ENCODE measurements at regions of chr4 and their contacts with region 1.

Region 1: GRCh38 chr4:7705062-7705461 is 234.6 kb downstream of the AFAP1 start:
- DNase-seq: no peak
- H3K4me3 ChIP-seq: no peak overlapping the region
- H3K27me3 ChIP-seq: no peaks in the 10 kb centered on the region
- CTCF ChIP-seq: no peak

Region 2: GRCh38 chr4:7595934-7596461 is 109.1 kb before region 1 on chr4:
- CTCF ChIA-PET with region 1: no interaction called
- POLR2A ChIA-PET with region 1: no interaction called
- DNase-seq: no peak
- H3K4me3 ChIP-seq: no peak overlapping the region
- H3K27me3 ChIP-seq: no peaks in the 10 kb centered on the region
- CTCF ChIP-seq: no peak

Region 3: DNA sequence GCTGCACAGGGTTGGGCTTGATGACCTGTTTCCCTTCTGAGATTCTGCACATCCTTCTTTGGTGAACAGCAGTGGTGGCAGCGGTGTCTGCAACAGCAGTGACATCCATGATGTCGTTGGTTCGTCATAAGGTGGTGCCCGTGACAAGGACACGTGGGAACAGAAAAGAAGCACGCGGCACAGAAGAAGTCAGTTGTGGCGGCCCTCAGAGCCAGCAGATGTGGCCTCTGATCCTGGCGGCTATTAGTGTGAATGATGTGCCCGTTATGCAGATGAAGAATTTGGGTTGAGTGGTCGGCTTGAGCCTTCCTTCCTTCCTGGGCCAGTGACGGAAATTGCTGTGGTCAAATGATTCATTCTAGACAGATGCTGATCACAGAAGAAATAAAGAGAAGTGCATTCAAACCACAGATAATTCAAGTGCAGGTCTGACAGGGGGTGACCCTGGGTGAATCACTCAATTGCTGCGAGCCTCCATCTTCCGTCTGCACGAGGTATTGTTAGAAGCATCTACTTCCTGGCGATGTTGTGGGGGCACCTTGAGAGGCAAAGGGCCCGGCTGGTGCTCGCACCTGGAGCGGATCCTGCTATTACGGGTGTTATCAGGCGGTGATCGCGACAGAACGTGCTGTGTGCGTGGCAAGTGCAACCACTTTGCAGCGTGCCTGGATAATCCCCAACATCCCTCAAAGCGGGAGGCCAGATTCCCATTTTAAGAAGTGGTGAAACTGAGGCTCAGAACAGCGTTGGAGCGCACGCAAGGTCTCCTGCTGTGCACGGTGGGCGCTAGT is 55.1 kb before region 1 on chr4:
- CTCF ChIA-PET with region 1: no interaction called
- POLR2A ChIA-PET with region 1: no interaction called
- DNase-seq: peak; percentile 94
- H3K4me3 ChIP-seq: no peak overlapping the region
- H3K27me3 ChIP-seq: no peaks in the 10 kb centered on the region
- CTCF ChIP-seq: no peak

Region 4: GRCh38 chr4:7719354-7720174 is 14.5 kb after region 1 on chr4:
- CTCF ChIA-PET with region 1: interaction called, 11 read pairs
- POLR2A ChIA-PET with region 1: no interaction called
- DNase-seq: no peak
- H3K4me3 ChIP-seq: no peak overlapping the region
- H3K27me3 ChIP-seq: peaks cover 3% of the 10 kb centered on the region; the same call in 1 of the 2 replicates
- CTCF ChIP-seq: peak; percentile 87

Region 5: DNA sequence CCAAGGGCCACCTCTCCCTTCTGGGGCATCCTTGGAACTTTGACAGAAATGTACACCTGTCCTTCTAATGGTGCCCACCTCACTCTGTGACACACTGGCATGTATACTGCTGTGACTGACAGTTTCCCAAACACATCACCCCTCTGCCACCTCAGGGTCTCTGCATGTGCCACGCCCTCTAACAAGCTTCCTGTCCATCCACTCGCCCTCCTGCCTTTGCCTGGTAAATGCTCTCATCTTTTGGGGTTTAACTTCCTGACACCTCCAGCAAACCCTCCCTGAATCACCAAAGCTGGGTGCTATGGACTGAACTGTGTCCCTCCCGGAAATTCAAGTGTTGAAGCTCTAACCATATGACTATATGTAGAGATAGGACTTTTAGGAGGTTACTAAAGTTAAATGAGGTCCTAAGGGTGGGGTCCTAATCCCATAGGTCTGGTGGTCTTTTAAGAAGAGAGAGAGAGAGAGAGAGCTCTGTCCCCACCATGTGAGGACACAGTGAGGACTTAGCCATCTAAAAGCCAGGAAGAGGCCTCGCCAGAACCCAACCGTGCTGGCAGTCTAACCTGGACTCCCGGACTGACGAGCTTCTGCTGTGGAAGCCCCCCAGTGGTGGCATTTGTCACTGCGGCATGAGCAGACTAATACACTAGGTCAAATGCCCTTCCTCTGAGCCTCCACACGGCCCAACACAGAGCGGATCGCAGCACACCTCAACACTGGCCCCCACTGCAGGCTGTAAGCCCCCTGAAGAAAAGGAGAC is 138.9 kb after region 1 on chr4:
- CTCF ChIA-PET with region 1: no interaction called
- POLR2A ChIA-PET with region 1: no interaction called
- DNase-seq: no peak
- H3K4me3 ChIP-seq: no peak overlapping the region
- H3K27me3 ChIP-seq: no peaks in the 10 kb centered on the region
- CTCF ChIP-seq: peak; percentile 62